ENCODE measurements at regions of chr15 and their contacts with region 1.

Region 1: DNA sequence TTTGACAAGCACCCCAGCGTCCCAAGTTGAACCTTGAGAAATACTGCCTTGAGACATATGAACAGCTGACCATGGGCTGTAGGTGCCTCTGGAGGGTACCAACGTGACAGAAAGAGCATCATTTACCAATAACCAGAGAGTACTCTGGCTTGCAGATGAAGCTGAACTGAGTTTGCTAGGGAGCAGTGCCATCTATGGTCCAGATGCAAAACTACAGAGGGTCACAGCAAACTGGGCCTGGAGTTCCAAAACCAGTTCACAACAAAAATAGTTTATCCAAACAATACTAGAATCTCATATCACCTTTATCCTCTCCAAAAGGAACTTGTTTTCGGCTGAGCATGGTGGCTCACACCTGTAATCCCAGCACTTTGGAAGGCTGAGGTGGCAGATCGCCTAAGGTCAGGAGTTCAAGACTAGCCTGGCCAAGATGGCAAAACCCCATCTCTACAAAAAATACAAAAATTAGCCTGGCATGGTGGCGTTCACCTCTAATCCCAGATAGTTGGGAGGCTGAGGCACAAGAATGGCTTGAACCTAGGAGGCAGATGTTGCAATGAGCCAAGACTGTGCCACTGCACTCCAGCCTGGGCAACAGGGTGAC is 69.3 kb downstream of the CHAC1 start:
- DNase-seq: peak; percentile 34
- H3K4me3 ChIP-seq: no peak overlapping the region
- H3K27ac ChIP-seq: no peak overlapping the region
- H3K4me1 ChIP-seq: no peaks in the 10 kb centered on the region
- H3K27me3 ChIP-seq: no peaks in the 10 kb centered on the region
- CTCF ChIP-seq: peak; percentile 28 to 62 (median 46)
- POLR2A ChIP-seq: no peak

Region 2: DNA sequence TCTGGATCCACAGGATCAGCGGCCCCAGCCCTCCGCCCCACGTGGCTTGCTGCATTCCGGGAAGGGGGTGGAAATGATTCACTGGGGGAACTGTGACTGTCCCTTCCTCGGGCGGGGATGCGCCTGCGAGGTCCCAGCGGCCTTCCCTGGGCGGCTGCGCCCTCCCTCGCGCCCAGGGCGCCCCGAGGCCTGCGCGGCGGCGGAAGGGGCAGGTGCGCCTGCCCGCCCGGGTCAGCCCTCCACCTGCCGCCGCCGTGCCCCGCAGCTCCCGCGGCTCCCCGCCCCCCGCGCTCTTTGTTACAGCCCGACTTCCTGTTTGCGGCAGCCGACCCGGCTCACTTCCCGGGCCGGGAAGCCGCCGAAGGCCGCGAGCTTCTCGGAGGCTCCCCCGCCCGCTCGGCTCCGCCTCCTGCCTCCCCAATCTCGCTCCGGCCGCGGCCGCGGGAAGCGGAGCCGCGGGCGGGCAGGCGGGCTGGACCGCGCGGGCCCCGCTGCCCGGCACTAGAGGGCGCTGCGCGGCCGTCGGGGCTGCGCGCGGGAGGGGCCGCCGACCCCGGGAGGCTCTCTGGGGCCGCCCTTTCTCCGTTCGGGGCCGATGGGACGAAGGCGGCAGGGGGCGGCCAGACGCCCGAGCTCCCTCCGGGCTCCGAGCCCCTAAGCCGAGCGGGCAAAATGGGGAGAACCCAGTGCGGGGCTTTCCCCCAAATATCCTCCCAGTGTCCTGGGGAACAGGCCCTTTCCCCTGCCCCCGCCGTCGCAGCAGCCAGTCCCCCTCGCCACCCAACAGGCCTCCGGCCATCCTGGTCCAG is 80.9 kb before region 1 on chr15:
- intact Hi-C with region 1: loop called (anchors 10 kb)
- DNase-seq: peak; percentile 60
- H3K4me3 ChIP-seq: peak overlapping the region; percentile 58 to 60
- H3K27ac ChIP-seq: peak overlapping the region in 1 of 2 donors; percentile 56
- H3K4me1 ChIP-seq: peaks cover 10% of the 10 kb centered on the region
- H3K27me3 ChIP-seq: no peaks in the 10 kb centered on the region
- CTCF ChIP-seq: peak; percentile 39 to 74 (median 45)
- POLR2A ChIP-seq: no peak

Region 3: GRCh38 chr15:41205315-41205714 is 182.7 kb after region 1 on chr15:
- intact Hi-C with region 1: no loop called
- DNase-seq: no peak
- H3K4me3 ChIP-seq: no peak overlapping the region
- H3K27ac ChIP-seq: no peak overlapping the region
- H3K4me1 ChIP-seq: no peaks in the 10 kb centered on the region
- H3K27me3 ChIP-seq: no peaks in the 10 kb centered on the region
- CTCF ChIP-seq: no peak
- POLR2A ChIP-seq: no peak

Region 4: GRCh38 chr15:41443275-41443674 is 420.7 kb after region 1 on chr15:
- intact Hi-C with region 1: no loop called
- DNase-seq: no peak
- H3K4me3 ChIP-seq: no peak overlapping the region
- H3K27ac ChIP-seq: no peak overlapping the region
- H3K4me1 ChIP-seq: no peaks in the 10 kb centered on the region
- H3K27me3 ChIP-seq: no peaks in the 10 kb centered on the region
- CTCF ChIP-seq: no peak
- POLR2A ChIP-seq: no peak